Activated naive CD4-positive, alpha-beta T cell treated with anti-CD3 and anti-CD28 coated beads for 36 hours (primary cell): ENCODE measurements at regions of chr12 and their contacts with region 1.

Region 1: GRCh38 chr12:120116792-120117651 is 469 bp upstream of the RAB35 start:
- DNase-seq: peak; percentile 98
- H3K4me3 Mint-ChIP-seq: peak overlapping the region; percentile 81
- H3K27ac Mint-ChIP-seq: peak overlapping the region; percentile 85
- H3K4me1 Mint-ChIP-seq: peaks cover 72% of the 10 kb centered on the region
- H3K27me3 Mint-ChIP-seq: no peaks in the 10 kb centered on the region

Region 2: DNA sequence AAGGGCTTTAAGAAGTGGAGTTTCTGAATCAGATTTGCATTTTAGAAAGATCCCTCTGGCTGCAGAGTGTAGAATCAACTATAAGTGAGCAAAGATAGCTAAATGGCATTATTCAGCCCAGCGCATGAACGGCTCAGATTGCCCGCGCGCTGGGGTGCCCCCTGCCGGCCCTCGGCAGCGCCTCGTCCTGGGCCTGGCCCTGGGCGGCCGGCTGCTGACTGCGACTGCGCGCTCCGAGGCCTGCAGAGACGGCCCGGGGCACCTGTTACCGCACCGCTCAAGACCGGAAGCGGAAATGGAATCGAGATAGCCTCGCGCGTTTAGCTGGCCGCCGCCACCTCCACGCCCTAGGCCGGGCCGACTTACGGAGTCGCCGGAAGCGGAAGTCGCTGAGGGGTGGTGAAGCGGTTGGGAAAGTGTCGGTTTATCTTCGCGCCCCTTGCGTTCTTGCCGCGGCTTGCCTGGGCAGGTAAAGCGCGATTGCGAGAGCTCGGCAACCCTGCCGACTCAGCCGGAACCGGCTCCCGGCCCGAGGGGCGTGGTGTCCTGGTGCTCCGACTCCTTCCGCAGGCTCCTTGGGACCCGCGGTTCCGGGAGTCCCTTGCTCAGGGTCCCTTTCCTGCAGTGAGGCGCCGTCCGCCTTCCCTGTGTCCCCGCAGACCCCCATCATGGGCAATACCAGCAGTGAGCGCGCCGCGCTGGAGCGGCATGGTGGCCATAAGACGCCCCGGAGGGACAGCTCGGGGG is 449.3 kb before region 1 on chr12 and contains the start of gene PRKAB1:
- CTCF ChIA-PET with region 1: no interaction called
- intact Hi-C with region 1: loop called (anchors 1 kb)
- DNase-seq: peak; percentile 96
- H3K4me3 Mint-ChIP-seq: peak within 1 kb of the TSS; percentile 90
- H3K27ac Mint-ChIP-seq: peak within 1 kb of the TSS; percentile 95
- H3K4me1 Mint-ChIP-seq: peaks cover 52% of the 10 kb centered on the region
- H3K27me3 Mint-ChIP-seq: no peaks in the 10 kb centered on the region
- total RNA-seq, gene PRKAB1: 34.3 to 39.8 TPM

Region 3: DNA sequence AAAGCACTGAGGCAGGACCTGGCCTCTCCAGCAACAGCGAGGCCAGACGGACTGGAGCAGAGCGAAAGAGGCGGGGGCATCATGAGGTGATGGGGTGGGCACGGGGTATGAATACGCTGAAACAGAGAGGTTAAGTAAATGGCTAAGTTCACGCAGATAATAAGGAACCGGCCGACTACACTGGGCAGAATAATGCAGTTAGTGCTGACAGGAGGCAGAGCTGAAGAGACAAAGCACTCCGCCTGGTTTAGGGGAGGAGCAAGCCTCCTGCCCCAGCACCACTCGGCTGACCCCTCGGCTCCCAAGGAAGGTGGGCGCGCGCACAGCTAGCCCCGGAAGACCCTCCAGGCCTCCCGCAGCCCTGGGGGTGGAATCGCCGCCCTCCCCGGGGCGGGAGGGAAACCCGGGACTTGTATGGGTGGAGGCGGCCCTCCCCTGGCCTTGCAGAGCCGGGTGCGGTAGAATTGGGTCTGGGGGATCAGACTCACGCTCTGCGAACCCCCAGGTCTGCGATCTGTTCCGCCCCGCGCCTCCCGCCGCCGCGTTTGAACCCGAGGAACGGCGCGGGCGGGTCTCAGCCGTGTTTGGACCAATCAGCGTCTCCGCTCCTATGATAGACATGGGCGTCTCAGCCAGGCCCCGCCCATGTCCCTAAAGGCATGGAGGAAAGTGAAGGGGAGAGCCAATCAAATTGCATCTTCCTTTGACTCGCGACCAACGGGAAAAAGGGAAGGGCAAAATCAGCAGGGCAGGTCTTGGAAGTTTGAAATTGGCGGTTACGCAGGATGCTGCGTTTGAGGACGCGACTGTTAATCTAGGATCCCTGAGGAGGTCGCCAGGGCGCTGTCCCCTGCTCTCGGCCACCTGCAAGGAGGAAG is 240.0 kb before region 1 on chr12 and contains the start of gene CIT:
- CTCF ChIA-PET with region 1: no interaction called
- intact Hi-C with region 1: loop called (anchors 2 kb)
- DNase-seq: peak; percentile 94
- H3K4me3 Mint-ChIP-seq: peak within 1 kb of the TSS; percentile 97
- H3K27ac Mint-ChIP-seq: peak within 1 kb of the TSS; percentile 42
- H3K4me1 Mint-ChIP-seq: peaks cover 13% of the 10 kb centered on the region
- H3K27me3 Mint-ChIP-seq: no peaks in the 10 kb centered on the region
- total RNA-seq, gene CIT: 78.6 to 78.8 TPM

Region 4: GRCh38 chr12:119988782-119989668 is 128.0 kb before region 1 on chr12 and contains the start of gene BICDL1:
- CTCF ChIA-PET with region 1: no interaction called
- intact Hi-C with region 1: loop called (anchors 1 kb)
- DNase-seq: peak; percentile 97
- H3K4me3 Mint-ChIP-seq: peak within 1 kb of the TSS; percentile 91
- H3K27ac Mint-ChIP-seq: peak within 1 kb of the TSS; percentile 93
- H3K4me1 Mint-ChIP-seq: peaks cover 45% of the 10 kb centered on the region
- H3K27me3 Mint-ChIP-seq: no peaks in the 10 kb centered on the region
- total RNA-seq, gene BICDL1: 128 to 133 TPM

Region 5: GRCh38 chr12:120199595-120200306 is 82.7 kb after region 1 on chr12:
- CTCF ChIA-PET with region 1: interaction called, 9 read pairs
- intact Hi-C with region 1: loop called (anchors 1 kb)
- DNase-seq: peak; percentile 51
- H3K4me3 Mint-ChIP-seq: peak overlapping the region; percentile 93
- H3K27ac Mint-ChIP-seq: peak overlapping the region; percentile 99
- H3K4me1 Mint-ChIP-seq: peaks cover 42% of the 10 kb centered on the region
- H3K27me3 Mint-ChIP-seq: no peaks in the 10 kb centered on the region

Region 6: DNA sequence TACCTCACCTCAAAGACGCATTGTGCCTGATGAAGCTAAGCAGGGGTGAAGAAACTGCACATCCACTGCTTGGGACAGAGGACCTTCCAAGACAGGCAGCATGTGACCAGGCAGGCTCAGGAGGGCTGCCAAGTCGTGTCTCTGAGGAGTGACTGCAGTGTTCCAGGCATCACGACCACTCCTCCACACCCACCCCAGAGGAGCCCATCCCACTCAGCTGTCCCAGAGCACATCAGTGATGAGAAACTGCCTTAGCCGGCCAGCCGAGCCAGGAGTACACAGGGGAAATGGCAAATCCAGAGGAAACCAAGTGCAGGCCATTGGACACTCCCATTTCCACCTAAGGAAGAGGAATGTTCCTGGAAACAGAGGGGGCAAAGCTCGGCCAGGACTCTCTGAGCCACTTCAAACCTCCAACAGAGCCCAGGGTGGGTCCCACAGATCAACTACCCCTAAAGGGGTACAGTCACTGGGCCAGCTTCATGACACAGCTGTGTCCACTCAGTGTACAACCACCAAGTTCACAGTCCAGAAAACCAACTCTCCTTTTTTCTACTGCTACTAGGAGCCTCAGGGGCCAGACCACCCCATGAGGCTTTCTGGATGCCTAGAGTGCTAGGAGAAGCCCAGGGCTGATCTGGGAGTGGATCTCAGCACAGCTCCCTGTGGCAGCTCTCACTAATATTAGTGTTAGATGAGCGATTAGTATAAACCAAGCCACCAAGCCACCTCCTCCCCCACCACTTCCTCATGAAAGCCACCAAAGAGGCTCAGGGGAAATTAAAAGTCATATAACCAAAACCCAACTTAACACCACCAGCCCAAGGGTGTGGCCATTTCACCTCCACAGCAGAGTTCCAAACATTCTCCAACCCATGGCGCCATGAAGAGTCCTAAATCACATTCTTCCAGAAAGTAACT is 133.1 kb after region 1 on chr12:
- CTCF ChIA-PET with region 1: interaction called, 3 read pairs
- intact Hi-C with region 1: loop called (anchors 1 kb)
- DNase-seq: peak; percentile 69
- H3K4me3 Mint-ChIP-seq: peak overlapping the region; percentile 41
- H3K27ac Mint-ChIP-seq: peak overlapping the region; percentile 84
- H3K4me1 Mint-ChIP-seq: peaks cover 80% of the 10 kb centered on the region
- H3K27me3 Mint-ChIP-seq: no peaks in the 10 kb centered on the region

Region 7: DNA sequence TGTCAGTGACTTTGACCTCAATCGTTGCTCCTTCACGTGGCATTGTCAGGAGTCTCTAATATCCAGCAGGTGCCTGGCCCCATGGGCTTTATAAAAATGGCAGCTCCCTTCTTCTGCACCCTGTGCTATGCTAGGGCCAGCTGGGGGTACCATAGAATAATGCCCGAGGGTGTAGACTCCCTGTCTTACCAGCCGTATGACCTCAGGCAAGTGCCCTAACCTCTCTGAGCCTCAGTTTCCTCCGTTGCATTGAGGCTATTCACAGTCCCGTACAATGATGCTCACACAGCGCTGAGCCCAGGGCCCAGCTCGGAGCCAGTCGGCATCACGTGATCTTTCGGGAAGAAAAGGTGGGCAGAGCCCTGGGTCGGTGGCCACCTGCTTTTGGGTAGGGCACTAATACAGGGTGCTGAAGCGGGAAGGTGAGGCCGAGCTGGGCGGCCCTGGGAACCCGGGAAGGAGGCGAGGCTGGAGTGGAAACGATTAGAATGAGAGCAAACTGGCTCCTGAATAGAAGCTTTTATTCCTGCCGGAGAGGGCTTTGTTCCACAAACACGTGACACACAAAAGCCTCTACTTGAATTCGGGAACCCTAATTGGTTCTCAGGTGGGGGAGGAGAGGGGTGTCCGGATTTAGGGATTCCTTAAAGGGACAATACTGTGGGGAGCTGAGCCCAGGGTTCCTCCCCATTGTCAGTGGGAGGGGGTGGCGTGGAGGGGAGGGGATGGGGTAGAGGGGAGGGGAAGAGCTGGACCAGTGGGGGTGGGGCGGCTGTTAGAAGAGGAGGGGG is 271.9 kb after region 1 on chr12:
- CTCF ChIA-PET with region 1: no interaction called
- intact Hi-C with region 1: no loop called
- DNase-seq: no peak
- H3K4me3 Mint-ChIP-seq: no peak overlapping the region
- H3K27ac Mint-ChIP-seq: no peak overlapping the region
- H3K4me1 Mint-ChIP-seq: peaks cover 4% of the 10 kb centered on the region
- H3K27me3 Mint-ChIP-seq: peaks cover 33% of the 10 kb centered on the region

Region 8: GRCh38 chr12:120437754-120438494 is 320.9 kb after region 1 on chr12 and contains the start of gene COX6A1:
- CTCF ChIA-PET with region 1: no interaction called
- intact Hi-C with region 1: loop called (anchors 5 kb)
- DNase-seq: peak; percentile 99
- H3K4me3 Mint-ChIP-seq: peak within 1 kb of the TSS; percentile 92
- H3K27ac Mint-ChIP-seq: peak within 1 kb of the TSS; percentile 93
- H3K4me1 Mint-ChIP-seq: peaks cover 22% of the 10 kb centered on the region
- H3K27me3 Mint-ChIP-seq: no peaks in the 10 kb centered on the region
- total RNA-seq, gene COX6A1: 536 to 540 TPM